Endothelial cell of umbilical vein (primary cell): ENCODE measurements at regions of chr2 and their contacts with region 1.

Region 1: GRCh38 chr2:170554278-170554955 is 160.7 kb upstream of the SP5 start:
- DNase-seq: peak; percentile 90
- H3K4me3 ChIP-seq: no peak overlapping the region
- H3K27ac ChIP-seq: peak overlapping the region; percentile 5
- H3K4me1 ChIP-seq: peaks cover 9% of the 10 kb centered on the region
- H3K27me3 ChIP-seq: no peaks in the 10 kb centered on the region
- CTCF ChIP-seq: no peak
- POLR2A ChIP-seq: no peak

Region 2: DNA sequence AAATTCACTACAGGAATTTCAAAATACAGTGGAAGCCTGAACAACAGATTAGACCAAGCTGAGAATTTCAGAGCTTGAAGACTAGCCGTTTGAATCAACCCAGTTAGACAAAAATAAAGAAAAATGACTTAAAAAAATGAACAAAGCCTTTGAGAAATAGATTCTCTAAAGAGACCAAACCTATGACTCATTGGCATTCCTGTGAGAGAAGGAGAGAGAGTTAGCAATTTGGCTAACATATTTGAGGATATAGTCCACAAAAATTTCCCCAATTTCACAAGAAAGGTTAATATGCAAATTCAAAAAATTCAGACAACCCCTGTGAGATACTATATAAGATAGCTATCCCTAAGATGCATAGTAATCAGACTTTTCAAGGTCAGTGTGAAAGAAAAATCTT is 298.4 kb before region 1 on chr2:
- CTCF ChIA-PET with region 1: no interaction called
- POLR2A ChIA-PET with region 1: no interaction called
- dilution Hi-C with region 1: no loop called
- intact Hi-C with region 1: no loop called
- DNase-seq: no peak
- H3K4me3 ChIP-seq: no peak overlapping the region
- H3K27ac ChIP-seq: no peak overlapping the region
- H3K4me1 ChIP-seq: no peaks in the 10 kb centered on the region
- H3K27me3 ChIP-seq: peaks cover 0 to 8% of the 10 kb centered on the region in 2 experiments
- CTCF ChIP-seq: no peak
- POLR2A ChIP-seq: no peak

Region 3: GRCh38 chr2:170530284-170530745 is 24.1 kb before region 1 on chr2:
- CTCF ChIA-PET with region 1: interaction called, 6 read pairs
- POLR2A ChIA-PET with region 1: no interaction called
- dilution Hi-C with region 1: no loop called
- intact Hi-C with region 1: loop called (anchors 1 kb)
- DNase-seq: peak; percentile 75
- H3K4me3 ChIP-seq: peak overlapping the region in 1 of 3 experiments; percentile 29
- H3K27ac ChIP-seq: no peak overlapping the region
- H3K4me1 ChIP-seq: peaks cover 21% of the 10 kb centered on the region
- H3K27me3 ChIP-seq: no peaks in the 10 kb centered on the region
- CTCF ChIP-seq: no peak
- POLR2A ChIP-seq: no peak

Region 4: DNA sequence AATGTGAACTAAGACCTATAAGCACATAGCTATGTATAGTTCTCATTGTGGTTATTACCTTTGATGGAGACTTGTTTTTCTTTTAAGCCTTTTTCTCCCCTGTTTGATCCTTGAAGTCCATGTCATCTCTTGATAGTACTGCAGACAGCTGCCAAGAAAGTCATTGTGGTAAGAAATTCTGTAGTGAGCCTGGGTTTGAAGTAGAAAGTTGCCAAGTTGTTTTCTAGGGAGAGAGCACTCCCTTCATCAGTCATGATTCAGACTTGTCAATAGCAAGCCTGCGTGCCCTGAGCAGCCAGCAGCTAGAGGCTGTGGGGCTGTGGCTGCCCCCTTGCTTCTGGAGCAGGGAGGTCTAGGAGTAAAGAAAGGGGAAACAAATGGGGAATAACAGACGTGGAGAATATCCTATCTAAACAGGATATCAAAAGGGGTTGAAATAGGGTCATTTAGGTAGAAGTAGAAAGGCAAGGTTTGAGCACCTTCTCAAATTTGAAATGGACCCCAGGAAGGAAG is 169.1 kb after region 1 on chr2:
- CTCF ChIA-PET with region 1: no interaction called
- POLR2A ChIA-PET with region 1: no interaction called
- dilution Hi-C with region 1: no loop called
- intact Hi-C with region 1: no loop called
- DNase-seq: no peak
- H3K4me3 ChIP-seq: no peak overlapping the region
- H3K27ac ChIP-seq: no peak overlapping the region
- H3K4me1 ChIP-seq: no peaks in the 10 kb centered on the region
- H3K27me3 ChIP-seq: peaks cover 5 to 38% of the 10 kb centered on the region in 2 experiments
- CTCF ChIP-seq: no peak
- POLR2A ChIP-seq: no peak